ENCODE measurements at regions of chr20 and their contacts with region 1.

Region 1: GRCh38 chr20:48405669-48406308 is 422.0 kb downstream of the PREX1 start:
- DNase-seq: no peak
- ATAC-seq: no peak
- H3K4me3 ChIP-seq: no peak overlapping the region
- H3K4me3 Mint-ChIP-seq: no peak overlapping the region
- H3K27ac ChIP-seq: no peak overlapping the region
- H3K27ac Mint-ChIP-seq: no peak overlapping the region
- H3K4me1 ChIP-seq: no peaks in the 10 kb centered on the region
- H3K4me1 Mint-ChIP-seq: no peaks in the 10 kb centered on the region
- H3K27me3 ChIP-seq: peaks cover 5 to 8% of the 10 kb centered on the region in 2 experiments
- H3K27me3 Mint-ChIP-seq: peaks cover 44% of the 10 kb centered on the region
- CTCF ChIP-seq: no peak

Region 2: DNA sequence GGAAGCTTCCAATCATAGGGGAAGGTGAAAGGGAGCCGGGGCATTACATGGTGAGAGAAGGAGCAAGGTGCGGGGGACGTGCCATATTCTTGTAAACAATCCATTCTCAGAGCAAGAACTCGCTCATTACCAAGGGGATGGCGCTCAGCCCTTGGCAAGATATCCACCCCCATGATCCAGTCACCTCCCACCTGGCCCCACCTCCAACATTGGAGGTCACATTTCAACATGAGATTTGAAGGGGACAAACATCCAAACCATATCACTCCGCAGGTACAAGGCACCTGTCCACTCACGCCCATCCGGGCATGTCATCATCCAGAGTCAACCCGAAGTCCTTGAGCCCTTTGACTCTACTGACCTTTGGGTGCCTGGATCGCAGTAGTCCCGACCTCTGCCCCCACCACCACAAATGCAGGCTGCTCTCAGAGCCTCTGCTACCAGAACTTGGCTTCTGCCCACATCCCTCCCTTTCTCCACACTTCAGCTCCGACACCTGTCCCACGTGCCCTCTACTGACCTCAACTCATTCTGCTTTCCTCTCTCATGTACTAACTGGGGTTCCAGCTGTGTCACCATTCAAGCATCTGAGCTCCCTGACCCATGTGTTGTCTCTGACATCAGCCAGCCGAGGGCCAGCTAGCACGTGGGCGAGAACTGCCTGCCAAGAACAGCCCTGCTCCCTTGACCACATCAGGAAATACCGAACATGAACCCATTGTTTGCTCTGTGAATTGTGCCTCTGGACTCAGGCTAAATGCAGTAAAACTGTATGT is 122.3 kb before region 1 on chr20:
- CTCF ChIA-PET with region 1: no interaction called
- POLR2A ChIA-PET with region 1: no interaction called
- intact Hi-C with region 1: no loop called
- DNase-seq: no peak
- ATAC-seq: no peak
- H3K4me3 ChIP-seq: no peak overlapping the region
- H3K4me3 Mint-ChIP-seq: no peak overlapping the region
- H3K27ac ChIP-seq: no peak overlapping the region
- H3K27ac Mint-ChIP-seq: no peak overlapping the region
- H3K4me1 ChIP-seq: no peaks in the 10 kb centered on the region
- H3K4me1 Mint-ChIP-seq: no peaks in the 10 kb centered on the region
- H3K27me3 ChIP-seq: peaks cover 0 to 6% of the 10 kb centered on the region in 2 experiments
- H3K27me3 Mint-ChIP-seq: peaks cover 33% of the 10 kb centered on the region
- CTCF ChIP-seq: no peak

Region 3: GRCh38 chr20:48359697-48360336 is 46.0 kb before region 1 on chr20:
- CTCF ChIA-PET with region 1: no interaction called
- POLR2A ChIA-PET with region 1: no interaction called
- intact Hi-C with region 1: no loop called
- DNase-seq: no peak
- ATAC-seq: no peak
- H3K4me3 ChIP-seq: no peak overlapping the region
- H3K4me3 Mint-ChIP-seq: no peak overlapping the region
- H3K27ac ChIP-seq: no peak overlapping the region
- H3K27ac Mint-ChIP-seq: no peak overlapping the region
- H3K4me1 ChIP-seq: no peaks in the 10 kb centered on the region
- H3K4me1 Mint-ChIP-seq: no peaks in the 10 kb centered on the region
- H3K27me3 ChIP-seq: no peaks in the 10 kb centered on the region
- H3K27me3 Mint-ChIP-seq: peaks cover 20% of the 10 kb centered on the region
- CTCF ChIP-seq: no peak

Region 4: GRCh38 chr20:48371211-48371610 is 34.6 kb before region 1 on chr20:
- CTCF ChIA-PET with region 1: no interaction called
- POLR2A ChIA-PET with region 1: no interaction called
- intact Hi-C with region 1: loop called in 1 of 2 experiments (anchors 2 kb)
- DNase-seq: no peak
- ATAC-seq: no peak
- H3K4me3 ChIP-seq: no peak overlapping the region
- H3K4me3 Mint-ChIP-seq: no peak overlapping the region
- H3K27ac ChIP-seq: no peak overlapping the region
- H3K27ac Mint-ChIP-seq: no peak overlapping the region
- H3K4me1 ChIP-seq: peaks cover 5% of the 10 kb centered on the region
- H3K4me1 Mint-ChIP-seq: peaks cover 25% of the 10 kb centered on the region
- H3K27me3 ChIP-seq: peaks cover 0 to 6% of the 10 kb centered on the region in 2 experiments
- H3K27me3 Mint-ChIP-seq: peaks cover 4% of the 10 kb centered on the region
- CTCF ChIP-seq: no peak

Region 5: GRCh38 chr20:48421163-48421946 is 15.6 kb after region 1 on chr20:
- CTCF ChIA-PET with region 1: no interaction called
- POLR2A ChIA-PET with region 1: no interaction called
- intact Hi-C with region 1: no loop called
- DNase-seq: no peak
- ATAC-seq: no peak
- H3K4me3 ChIP-seq: no peak overlapping the region
- H3K4me3 Mint-ChIP-seq: no peak overlapping the region
- H3K27ac ChIP-seq: no peak overlapping the region
- H3K27ac Mint-ChIP-seq: no peak overlapping the region
- H3K4me1 ChIP-seq: no peaks in the 10 kb centered on the region
- H3K4me1 Mint-ChIP-seq: no peaks in the 10 kb centered on the region
- H3K27me3 ChIP-seq: peaks cover 3 to 12% of the 10 kb centered on the region in 2 experiments
- H3K27me3 Mint-ChIP-seq: peaks cover 20% of the 10 kb centered on the region
- CTCF ChIP-seq: no peak

Region 6: GRCh38 chr20:48463403-48464319 is 57.9 kb after region 1 on chr20:
- CTCF ChIA-PET with region 1: no interaction called
- POLR2A ChIA-PET with region 1: no interaction called
- intact Hi-C with region 1: no loop called
- DNase-seq: no peak
- ATAC-seq: no peak
- H3K4me3 ChIP-seq: no peak overlapping the region
- H3K4me3 Mint-ChIP-seq: no peak overlapping the region
- H3K27ac ChIP-seq: no peak overlapping the region
- H3K27ac Mint-ChIP-seq: no peak overlapping the region
- H3K4me1 ChIP-seq: no peaks in the 10 kb centered on the region
- H3K4me1 Mint-ChIP-seq: no peaks in the 10 kb centered on the region
- H3K27me3 ChIP-seq: peaks cover 0 to 2% of the 10 kb centered on the region in 2 experiments
- H3K27me3 Mint-ChIP-seq: no peaks in the 10 kb centered on the region
- CTCF ChIP-seq: no peak

Region 7: GRCh38 chr20:48962976-48963771 is 557.4 kb after region 1 on chr20:
- CTCF ChIA-PET with region 1: no interaction called
- POLR2A ChIA-PET with region 1: no interaction called
- intact Hi-C with region 1: loop called in 1 of 2 experiments (anchors 5 kb)
- DNase-seq: no peak
- ATAC-seq: no peak
- H3K4me3 ChIP-seq: no peak overlapping the region
- H3K4me3 Mint-ChIP-seq: no peak overlapping the region
- H3K27ac ChIP-seq: no peak overlapping the region
- H3K27ac Mint-ChIP-seq: no peak overlapping the region
- H3K4me1 ChIP-seq: no peaks in the 10 kb centered on the region
- H3K4me1 Mint-ChIP-seq: no peaks in the 10 kb centered on the region
- H3K27me3 ChIP-seq: no peaks in the 10 kb centered on the region
- H3K27me3 Mint-ChIP-seq: no peaks in the 10 kb centered on the region
- CTCF ChIP-seq: no peak